CD4-positive, alpha-beta memory T cell (primary cell): ENCODE measurements at regions of chr3 and their contacts with region 1.

Region 1: GRCh38 chr3:39171860-39172259 is 18.5 kb upstream of the CSRNP1 start:
- DNase-seq: no peak
- H3K4me3 ChIP-seq: no peak overlapping the region
- H3K4me3 Mint-ChIP-seq: no peak overlapping the region
- H3K27ac ChIP-seq: no peak overlapping the region
- H3K27ac Mint-ChIP-seq: no peak overlapping the region
- H3K4me1 ChIP-seq: peaks cover under 1% of the 10 kb centered on the region
- H3K4me1 Mint-ChIP-seq: peaks cover 0 to 11% (median 6%) of the 10 kb centered on the region in 4 donors
- H3K27me3 ChIP-seq: no peaks in the 10 kb centered on the region
- H3K27me3 Mint-ChIP-seq: no peaks in the 10 kb centered on the region

Region 2: DNA sequence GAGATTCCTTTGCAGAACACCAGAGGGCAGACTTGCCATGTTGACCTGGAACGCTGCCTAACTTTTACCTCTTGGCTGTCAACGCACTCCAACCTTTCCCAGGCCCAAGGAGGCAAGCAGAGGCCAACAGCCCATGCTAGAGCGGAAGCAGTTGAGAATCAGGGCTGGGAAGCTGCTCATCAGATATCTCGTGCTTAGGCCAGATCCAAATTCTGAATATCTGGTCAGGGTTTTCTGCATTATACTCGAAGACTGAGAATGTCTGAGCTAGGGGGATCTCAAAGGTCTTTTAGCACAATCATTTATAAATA is 18.1 kb after region 1 on chr3:
- CTCF ChIA-PET with region 1: interaction called, 21 read pairs
- POLR2A ChIA-PET with region 1: interaction called, 3 read pairs
- intact Hi-C with region 1: no loop called
- DNase-seq: peak; percentile 60 to 65 (median 64)
- H3K4me3 ChIP-seq: no peak overlapping the region
- H3K4me3 Mint-ChIP-seq: no peak overlapping the region
- H3K27ac ChIP-seq: no peak overlapping the region
- H3K27ac Mint-ChIP-seq: peak overlapping the region in 6 of 7 donors; percentile 2 to 89 (median 66)
- H3K4me1 ChIP-seq: no peaks in the 10 kb centered on the region
- H3K4me1 Mint-ChIP-seq: peaks cover 0 to 7% (median 5%) of the 10 kb centered on the region in 4 donors
- H3K27me3 ChIP-seq: no peaks in the 10 kb centered on the region
- H3K27me3 Mint-ChIP-seq: peaks cover 0 to 1% of the 10 kb centered on the region in 2 donors

Region 3: GRCh38 chr3:39208463-39209055 is 36.7 kb after region 1 on chr3:
- CTCF ChIA-PET with region 1: no interaction called
- POLR2A ChIA-PET with region 1: no interaction called
- intact Hi-C with region 1: no loop called
- DNase-seq: peak in 4 of 5 donors; percentile 27 to 39 (median 32)
- H3K4me3 ChIP-seq: no peak overlapping the region
- H3K4me3 Mint-ChIP-seq: no peak overlapping the region
- H3K27ac ChIP-seq: no peak overlapping the region
- H3K27ac Mint-ChIP-seq: no peak overlapping the region
- H3K4me1 ChIP-seq: peaks cover 12% of the 10 kb centered on the region
- H3K4me1 Mint-ChIP-seq: peaks cover 0 to 7% (median 5%) of the 10 kb centered on the region in 4 donors
- H3K27me3 ChIP-seq: no peaks in the 10 kb centered on the region
- H3K27me3 Mint-ChIP-seq: peaks cover 4% of the 10 kb centered on the region in 2 donors

Region 4: GRCh38 chr3:39255503-39256325 is 83.9 kb after region 1 on chr3:
- CTCF ChIA-PET with region 1: no interaction called
- POLR2A ChIA-PET with region 1: no interaction called
- intact Hi-C with region 1: no loop called
- DNase-seq: no peak
- H3K4me3 ChIP-seq: no peak overlapping the region
- H3K4me3 Mint-ChIP-seq: no peak overlapping the region
- H3K27ac ChIP-seq: no peak overlapping the region
- H3K27ac Mint-ChIP-seq: peak overlapping the region in 3 of 7 donors; percentile 20 to 67 (median 33)
- H3K4me1 ChIP-seq: peaks cover 24% of the 10 kb centered on the region
- H3K4me1 Mint-ChIP-seq: peaks cover 9 to 38% (median 14%) of the 10 kb centered on the region in 4 donors
- H3K27me3 ChIP-seq: no peaks in the 10 kb centered on the region
- H3K27me3 Mint-ChIP-seq: peaks cover 0 to 10% of the 10 kb centered on the region in 2 donors

Region 5: GRCh38 chr3:39541917-39542329 is 370.1 kb after region 1 on chr3:
- CTCF ChIA-PET with region 1: no interaction called
- POLR2A ChIA-PET with region 1: no interaction called
- intact Hi-C with region 1: no loop called
- DNase-seq: no peak
- H3K4me3 ChIP-seq: no peak overlapping the region
- H3K4me3 Mint-ChIP-seq: peak overlapping the region in 1 of 8 donors; percentile 8
- H3K27ac ChIP-seq: no peak overlapping the region
- H3K27ac Mint-ChIP-seq: no peak overlapping the region
- H3K4me1 ChIP-seq: no peaks in the 10 kb centered on the region
- H3K4me1 Mint-ChIP-seq: peaks cover 4 to 5% (median 4%) of the 10 kb centered on the region in 4 donors
- H3K27me3 ChIP-seq: no peaks in the 10 kb centered on the region
- H3K27me3 Mint-ChIP-seq: peaks cover 8 to 11% of the 10 kb centered on the region in 2 donors